ENCODE measurements at regions of chr14 and their contacts with region 1.

Region 1: GRCh38 chr14:87896393-87897380 is 96.3 kb downstream of the GALC start:
- DNase-seq: peak; percentile 65
- H3K4me3 ChIP-seq: no peak overlapping the region
- H3K27ac ChIP-seq: no peak overlapping the region
- H3K4me1 ChIP-seq: no peaks in the 10 kb centered on the region
- H3K27me3 ChIP-seq: no peaks in the 10 kb centered on the region
- CTCF ChIP-seq: peak; percentile 81

Region 2: DNA sequence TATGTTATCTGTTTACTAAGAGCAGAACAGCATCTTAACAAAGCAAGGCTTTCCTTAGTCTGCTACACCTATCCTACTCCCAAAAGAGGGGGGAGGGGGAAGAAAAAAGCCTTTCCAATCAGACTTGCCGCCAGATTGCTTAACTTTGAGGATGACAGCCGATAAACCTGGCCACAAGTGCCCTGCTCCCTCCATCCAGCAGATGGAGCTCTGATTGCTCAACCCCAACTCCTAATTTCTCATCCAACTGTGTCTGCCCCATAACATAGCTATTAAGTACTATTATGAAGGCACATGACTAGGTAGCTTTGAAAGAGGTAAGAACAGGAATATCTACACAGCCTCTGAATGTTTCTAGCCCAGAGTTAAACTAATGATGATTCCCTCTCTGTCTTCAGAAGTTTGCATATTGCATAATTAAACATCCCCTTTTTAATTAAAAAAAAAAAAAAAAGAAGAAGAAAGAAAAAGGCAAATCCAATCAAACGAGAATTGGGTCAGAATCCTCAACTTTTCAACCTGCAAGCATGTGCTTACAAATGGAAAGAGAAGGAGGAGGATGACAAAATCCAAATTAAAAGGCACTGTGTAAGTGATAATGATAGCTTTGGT is 151.1 kb before region 1 on chr14:
- CTCF ChIA-PET with region 1: interaction called, 3 read pairs
- POLR2A ChIA-PET with region 1: no interaction called
- intact Hi-C with region 1: loop called (anchors 1 kb)
- DNase-seq: peak; percentile 54
- H3K4me3 ChIP-seq: no peak overlapping the region
- H3K27ac ChIP-seq: no peak overlapping the region
- H3K4me1 ChIP-seq: no peaks in the 10 kb centered on the region
- H3K27me3 ChIP-seq: no peaks in the 10 kb centered on the region
- CTCF ChIP-seq: peak; percentile 68

Region 3: DNA sequence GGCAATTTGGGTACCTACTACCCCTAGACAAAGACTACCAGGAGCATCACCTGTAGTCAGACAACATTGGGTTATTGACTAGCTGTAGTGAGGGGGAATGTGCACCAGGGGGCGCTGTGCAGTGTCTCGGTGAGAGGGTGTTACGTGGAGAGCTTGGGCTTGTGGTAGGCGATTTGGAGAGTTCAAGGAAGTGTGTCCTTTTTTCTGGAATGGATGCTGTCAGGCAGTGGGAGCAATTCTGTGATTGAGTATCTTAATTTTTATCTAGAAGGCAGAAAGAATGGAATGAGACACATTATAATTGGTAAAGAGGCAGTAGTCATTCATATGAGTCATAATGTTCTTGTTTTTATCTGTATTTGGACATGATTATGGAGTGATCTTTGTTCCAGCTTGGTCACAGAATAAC is 91.4 kb before region 1 on chr14:
- CTCF ChIA-PET with region 1: interaction called, 5 read pairs
- POLR2A ChIA-PET with region 1: no interaction called
- intact Hi-C with region 1: loop called (anchors 1 kb)
- DNase-seq: peak; percentile 43
- H3K4me3 ChIP-seq: no peak overlapping the region
- H3K27ac ChIP-seq: no peak overlapping the region
- H3K4me1 ChIP-seq: no peaks in the 10 kb centered on the region
- H3K27me3 ChIP-seq: no peaks in the 10 kb centered on the region
- CTCF ChIP-seq: peak; percentile 82